Activated T-helper 2 cell treated with anti-CD3 and anti-CD28 coated beads, Interferon-gamma antibody, Interleukin-2, Interleukin-4, amounts not matched to agents 10 μg/mL and 5 μg/mL and 100 μg/mL, durations not matched to agents 14 hours and 24 hours and 36 hours (primary cell): ENCODE measurements at regions of chr9 and their contacts with region 1.

Region 1: GRCh38 chr9:129552064-129552463 is 68.8 kb downstream of the C9orf50 start:
- DNase-seq: no peak
- H3K4me3 Mint-ChIP-seq: no peak overlapping the region
- H3K27ac Mint-ChIP-seq: no peak overlapping the region
- H3K4me1 Mint-ChIP-seq: peaks cover 2% of the 10 kb centered on the region
- H3K27me3 Mint-ChIP-seq: peaks cover 42% of the 10 kb centered on the region

Region 2: GRCh38 chr9:129365196-129365595 is 186.9 kb before region 1 on chr9:
- intact Hi-C with region 1: no loop called
- DNase-seq: no peak
- H3K4me3 Mint-ChIP-seq: no peak overlapping the region
- H3K27ac Mint-ChIP-seq: no peak overlapping the region
- H3K4me1 Mint-ChIP-seq: no peaks in the 10 kb centered on the region
- H3K27me3 Mint-ChIP-seq: peaks cover 8% of the 10 kb centered on the region

Region 3: DNA sequence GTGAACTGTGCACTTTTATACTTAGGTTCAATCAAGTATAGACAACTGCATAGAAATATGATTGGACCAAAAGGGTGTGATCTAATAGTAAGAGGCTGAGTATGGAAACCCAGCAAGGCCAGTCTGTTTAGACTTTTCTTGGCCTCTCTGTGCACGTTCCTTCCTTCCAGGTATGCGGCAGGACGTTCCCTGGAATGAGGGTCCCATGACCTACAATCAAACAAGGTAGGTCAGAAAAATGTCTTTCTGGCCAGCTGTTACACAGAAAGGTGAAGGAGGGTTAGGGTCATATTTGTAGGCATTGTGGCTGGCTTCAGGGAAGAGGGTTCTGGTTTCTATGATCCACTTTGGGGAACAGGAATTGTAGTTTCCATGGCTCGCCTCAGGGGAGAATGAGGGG is 16.0 kb before region 1 on chr9:
- intact Hi-C with region 1: no loop called
- DNase-seq: no peak
- H3K4me3 Mint-ChIP-seq: no peak overlapping the region
- H3K27ac Mint-ChIP-seq: no peak overlapping the region
- H3K4me1 Mint-ChIP-seq: no peaks in the 10 kb centered on the region
- H3K27me3 Mint-ChIP-seq: peaks cover 22% of the 10 kb centered on the region

Region 4: GRCh38 chr9:129569502-129570449 is 17.7 kb after region 1 on chr9:
- intact Hi-C with region 1: loop called (anchors 2 kb)
- DNase-seq: no peak
- H3K4me3 Mint-ChIP-seq: peak overlapping the region; percentile 76
- H3K27ac Mint-ChIP-seq: peak overlapping the region; percentile 47
- H3K4me1 Mint-ChIP-seq: peaks cover 22% of the 10 kb centered on the region
- H3K27me3 Mint-ChIP-seq: peaks cover 24% of the 10 kb centered on the region

Region 5: GRCh38 chr9:129676975-129677841 is 125.1 kb after region 1 on chr9:
- intact Hi-C with region 1: no loop called
- DNase-seq: no peak
- H3K4me3 Mint-ChIP-seq: no peak overlapping the region
- H3K27ac Mint-ChIP-seq: no peak overlapping the region
- H3K4me1 Mint-ChIP-seq: peaks cover 2% of the 10 kb centered on the region
- H3K27me3 Mint-ChIP-seq: peaks cover 6% of the 10 kb centered on the region

Region 6: DNA sequence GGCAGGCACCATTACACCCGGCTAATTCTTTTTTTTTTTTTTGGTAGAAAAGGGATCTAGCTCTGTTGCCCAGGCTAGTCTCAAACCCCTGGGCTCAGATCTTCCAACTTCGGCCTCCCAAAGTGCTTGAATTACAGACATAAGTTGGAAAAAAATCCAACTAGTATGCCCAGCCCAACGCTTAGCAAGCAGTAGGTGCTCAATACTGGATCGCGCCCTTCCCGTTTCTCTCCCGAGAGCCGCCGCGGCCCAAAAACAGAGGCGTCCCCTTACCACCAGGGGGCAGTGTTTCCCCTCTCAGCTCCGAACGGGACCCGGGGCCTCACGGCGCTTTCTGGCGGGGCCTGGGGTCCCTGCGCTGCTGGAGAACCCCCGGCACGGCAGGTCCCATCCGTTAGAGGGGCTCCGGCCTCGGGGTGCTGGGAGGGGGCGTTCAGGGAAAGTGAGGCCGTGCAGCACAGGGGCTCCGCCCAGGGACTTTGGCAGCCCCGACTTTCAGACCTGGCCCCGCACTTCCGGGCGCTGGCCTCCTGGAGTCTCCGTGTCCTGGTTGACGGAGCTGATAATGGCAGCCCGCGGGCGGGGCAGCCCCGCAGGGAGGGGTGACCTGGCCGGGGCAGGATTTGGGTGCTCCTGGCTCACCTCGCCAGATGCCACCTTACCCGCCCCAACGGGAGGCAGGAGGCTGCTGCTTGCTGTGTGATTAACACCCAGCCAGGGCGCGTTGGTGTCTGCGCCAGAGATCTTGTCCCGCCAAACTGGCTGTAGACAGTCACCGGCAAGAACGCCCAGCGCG is 185.6 kb after region 1 on chr9:
- intact Hi-C with region 1: no loop called
- DNase-seq: peak; percentile 81
- H3K4me3 Mint-ChIP-seq: peak overlapping the region; percentile 68
- H3K27ac Mint-ChIP-seq: peak overlapping the region; percentile 52
- H3K4me1 Mint-ChIP-seq: peaks cover 6% of the 10 kb centered on the region
- H3K27me3 Mint-ChIP-seq: peaks cover 4% of the 10 kb centered on the region